Right cardiac atrium (tissue), 5 donors: ENCODE measurements at regions of chr15 and their contacts with region 1.

Region 1: GRCh38 chr15:88610701-88611231 is 10.4 kb upstream of the AEN start:
- DNase-seq: no peak
- ATAC-seq: no peak
- H3K4me3 ChIP-seq: no peak overlapping the region
- H3K27ac ChIP-seq: no peak overlapping the region
- H3K4me1 ChIP-seq: no peaks in the 10 kb centered on the region
- H3K27me3 ChIP-seq: no peaks in the 10 kb centered on the region

Region 2: DNA sequence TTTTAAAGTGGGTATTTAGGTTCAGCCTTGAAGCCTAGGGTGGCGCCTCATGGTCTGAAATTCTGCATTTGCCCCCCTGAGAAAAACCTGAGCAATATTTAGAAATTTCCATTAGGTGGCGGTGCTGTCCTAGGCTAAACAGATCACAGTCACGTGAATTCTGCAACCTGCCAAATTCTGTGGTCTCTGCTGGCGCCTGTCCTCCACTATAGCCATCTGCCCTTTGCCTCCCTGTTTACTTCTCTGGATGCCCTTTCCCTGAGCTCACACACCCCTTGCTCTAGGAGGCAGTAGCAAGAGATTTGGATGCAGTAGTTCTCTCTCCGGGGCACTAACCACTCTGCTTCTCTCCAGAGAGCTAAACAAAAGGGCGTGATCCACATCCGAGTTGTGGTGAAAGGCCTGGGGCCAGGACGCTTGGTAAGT is 134.1 kb before region 1 on chr15:
- intact Hi-C with region 1: loop called in 3 of 4 experiments (anchors 2 to 5 kb)
- DNase-seq: no peak
- ATAC-seq: peak; percentile 72 to 73
- H3K4me3 ChIP-seq: no peak overlapping the region
- H3K27ac ChIP-seq: no peak overlapping the region
- H3K4me1 ChIP-seq: no peaks in the 10 kb centered on the region
- H3K27me3 ChIP-seq: no peaks in the 10 kb centered on the region

Region 3: DNA sequence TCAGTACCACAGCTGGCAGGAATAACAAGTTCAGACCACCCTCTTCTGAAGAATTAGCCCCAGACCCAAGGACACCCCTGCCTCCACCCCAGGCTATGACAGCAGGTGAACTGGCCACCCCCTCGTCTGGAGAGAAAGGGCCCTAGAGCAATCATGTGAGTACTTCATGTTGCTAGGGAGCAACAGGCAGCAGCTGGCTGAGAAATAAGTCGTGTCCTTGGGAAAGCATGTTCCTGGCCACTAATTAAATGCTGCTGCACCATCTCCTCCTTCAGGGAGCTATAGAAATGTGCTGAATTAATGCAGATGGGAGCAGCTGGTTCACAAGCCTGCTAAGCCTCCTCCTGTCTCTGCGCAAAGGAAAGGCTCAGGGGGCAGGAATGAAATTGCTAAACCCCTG is 111.8 kb before region 1 on chr15:
- intact Hi-C with region 1: no loop called
- DNase-seq: no peak
- ATAC-seq: peak; percentile 45 to 57
- H3K4me3 ChIP-seq: no peak overlapping the region
- H3K27ac ChIP-seq: peak overlapping the region; percentile 72
- H3K4me1 ChIP-seq: peaks cover 4% of the 10 kb centered on the region
- H3K27me3 ChIP-seq: no peaks in the 10 kb centered on the region